ENCODE measurements at regions of chr12 and their contacts with region 1.

Region 1: GRCh38 chr12:65895759-65896656 is 71.7 kb downstream of the HMGA2 start:
- DNase-seq: peak; percentile 97
- ATAC-seq: peak; percentile 96
- H3K4me3 ChIP-seq: peak overlapping the region; percentile 15 to 60 (median 53); a peak in 5 of 6 replicates
- H3K27ac ChIP-seq: peak overlapping the region; percentile 92
- H3K4me1 ChIP-seq: peaks cover 91% of the 10 kb centered on the region
- H3K27me3 ChIP-seq: no peaks in the 10 kb centered on the region
- CTCF ChIP-seq: no peak
- EP300 ChIP-seq: no peak; a peak in 1 of 4 replicates
- POLR2A ChIP-seq: peak; percentile 56 to 63; a peak in 3 of 4 replicates
- RAD21 ChIP-seq: no peak

Region 2: DNA sequence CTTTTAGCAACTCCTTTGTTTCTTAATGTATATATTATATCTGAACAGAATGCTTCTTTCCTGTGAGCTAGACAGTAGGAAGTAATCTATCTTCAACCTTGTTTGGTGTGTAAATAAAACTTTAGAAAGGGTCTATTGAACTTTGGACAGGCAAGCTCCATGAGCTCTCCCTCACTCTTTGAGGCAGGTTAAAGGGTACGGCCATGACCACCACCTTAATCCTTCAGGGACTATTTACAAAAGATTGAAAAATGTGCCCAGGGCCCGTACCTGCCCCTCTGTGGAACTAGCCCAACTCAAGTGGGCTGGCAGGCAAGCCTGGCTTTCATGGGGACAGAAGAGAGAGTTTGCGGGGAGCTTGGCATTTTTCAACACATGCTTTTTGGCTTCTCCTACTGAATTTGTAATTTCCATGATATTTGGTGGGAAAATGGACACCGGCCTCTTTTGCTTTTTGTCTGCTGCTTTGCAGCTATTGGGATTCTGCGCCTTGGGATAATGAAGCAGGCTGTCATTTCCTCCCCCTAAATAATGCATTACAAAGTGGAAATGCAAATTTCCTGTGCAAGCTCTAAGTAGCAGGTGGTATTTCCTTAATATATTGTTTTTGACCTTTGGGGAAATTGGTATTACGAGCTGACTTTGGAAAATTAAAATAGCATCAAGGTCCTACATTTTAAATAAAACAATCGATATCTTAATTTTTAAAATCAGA is 34.3 kb after region 1 on chr12:
- CTCF ChIA-PET with region 1: no interaction called
- POLR2A ChIA-PET with region 1: interaction called, 27 read pairs
- in situ Hi-C with region 1: no loop called
- intact Hi-C with region 1: loop called (anchors 1 kb)
- DNase-seq: peak; percentile 96
- ATAC-seq: peak; percentile 88
- H3K4me3 ChIP-seq: peak overlapping the region in 1 of 3 experiments; percentile 25; a peak in 1 of 6 replicates
- H3K27ac ChIP-seq: peak overlapping the region; percentile 76
- H3K4me1 ChIP-seq: peaks cover 100% of the 10 kb centered on the region
- H3K27me3 ChIP-seq: no peaks in the 10 kb centered on the region
- CTCF ChIP-seq: 0 out of 2 replicates have a peak, but pooled peaks have one; percentile 12
- EP300 ChIP-seq: peak in 1 of 2 experiments; percentile 99; a peak in 2 of 4 replicates
- POLR2A ChIP-seq: no peak
- RAD21 ChIP-seq: no peak

Region 3: GRCh38 chr12:65962921-65963861 is 67.2 kb after region 1 on chr12:
- CTCF ChIA-PET with region 1: no interaction called
- POLR2A ChIA-PET with region 1: interaction called, 8 read pairs
- in situ Hi-C with region 1: no loop called
- intact Hi-C with region 1: loop called (anchors 5 kb)
- DNase-seq: no peak
- ATAC-seq: no peak
- H3K4me3 ChIP-seq: no peak overlapping the region
- H3K27ac ChIP-seq: no peak overlapping the region
- H3K4me1 ChIP-seq: peaks cover 48% of the 10 kb centered on the region
- H3K27me3 ChIP-seq: no peaks in the 10 kb centered on the region
- CTCF ChIP-seq: peak; percentile 43
- EP300 ChIP-seq: no peak
- POLR2A ChIP-seq: no peak
- RAD21 ChIP-seq: no peak

Region 4: DNA sequence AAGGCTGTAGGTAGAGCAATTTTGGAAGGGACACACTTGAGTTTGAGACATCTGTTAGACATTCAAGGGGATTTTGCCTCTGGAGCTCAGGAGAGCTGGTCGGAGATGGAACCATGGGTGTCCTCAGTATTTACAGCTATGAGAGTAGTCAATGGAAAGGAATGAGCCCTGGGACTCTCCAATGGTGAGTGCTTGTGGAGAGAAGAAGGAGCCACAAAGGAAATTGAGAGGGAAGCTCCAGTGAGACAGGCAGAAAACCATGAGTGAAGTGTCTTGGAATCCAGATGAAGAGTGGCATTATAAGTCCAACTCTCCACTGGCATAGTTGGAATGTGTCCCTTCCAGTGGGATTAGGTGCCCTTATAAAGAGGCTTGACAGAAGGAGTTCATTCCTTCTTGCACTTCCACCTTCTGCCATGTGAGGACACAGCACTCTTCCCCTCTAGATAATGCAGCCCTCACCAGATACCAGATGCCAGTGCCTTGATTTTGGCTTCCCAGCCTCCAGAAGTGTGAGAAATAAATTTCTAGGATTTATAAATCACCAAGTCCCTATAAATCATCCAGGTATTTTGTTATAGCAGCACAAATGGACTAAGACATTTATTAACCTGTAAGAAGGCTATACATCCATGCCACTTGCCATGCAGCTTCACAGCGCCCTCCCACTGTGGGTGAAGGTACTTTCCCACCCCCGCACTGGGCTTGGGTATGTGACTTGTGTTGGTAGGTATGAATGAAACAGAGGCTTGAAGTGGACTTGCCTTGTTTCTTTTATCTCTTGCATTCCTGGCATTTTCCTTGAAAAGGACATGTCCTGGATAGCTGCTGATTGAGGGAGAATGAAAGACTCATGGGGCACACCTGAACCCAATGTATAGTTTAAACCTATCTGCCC is 207.3 kb after region 1 on chr12:
- CTCF ChIA-PET with region 1: no interaction called
- POLR2A ChIA-PET with region 1: no interaction called
- in situ Hi-C with region 1: no loop called
- intact Hi-C with region 1: no loop called
- DNase-seq: no peak
- ATAC-seq: no peak
- H3K4me3 ChIP-seq: no peak overlapping the region
- H3K27ac ChIP-seq: no peak overlapping the region
- H3K4me1 ChIP-seq: peaks cover 12% of the 10 kb centered on the region
- H3K27me3 ChIP-seq: no peaks in the 10 kb centered on the region
- CTCF ChIP-seq: no peak
- EP300 ChIP-seq: no peak
- POLR2A ChIP-seq: no peak
- RAD21 ChIP-seq: no peak